ENCODE measurements at regions of chr4 and their contacts with region 1.

Region 1: DNA sequence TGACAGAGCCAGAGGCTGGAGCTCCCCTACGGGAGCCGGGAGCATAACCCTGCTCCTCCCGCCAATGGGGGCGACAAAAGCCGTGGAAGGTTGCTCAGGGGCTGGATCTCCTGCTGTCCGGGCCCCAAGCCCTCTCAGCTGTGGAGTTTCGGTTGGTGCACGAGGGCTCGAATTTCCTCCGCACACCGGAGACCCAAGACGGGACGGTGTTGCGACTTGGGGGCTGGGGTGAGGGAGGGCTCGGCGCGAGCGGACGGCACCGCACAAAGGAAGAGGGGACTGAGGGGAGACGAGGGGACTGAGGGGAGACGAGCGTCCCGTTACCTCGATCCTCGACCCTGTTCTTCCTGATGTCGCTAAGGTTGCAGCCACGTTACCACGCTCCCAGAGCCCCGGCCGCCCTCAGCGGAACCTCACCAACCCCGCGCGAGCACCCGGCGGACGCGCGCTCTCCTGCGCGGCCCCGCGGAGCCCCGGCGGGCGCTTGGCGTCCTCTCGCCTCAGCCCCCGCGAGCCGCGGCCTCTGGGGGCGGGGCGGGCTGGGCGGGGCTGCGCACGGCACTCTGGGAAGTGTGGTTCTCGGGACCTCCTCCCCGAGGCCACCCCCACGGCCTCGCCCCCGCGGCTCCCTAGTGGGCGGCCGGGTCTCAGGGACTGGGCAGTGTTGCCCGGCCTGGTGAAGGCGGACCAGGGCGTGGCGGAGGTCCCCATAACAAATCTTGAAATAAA is at the start of gene KLHL8:
- DNase-seq: peak; percentile 71 to 94 (median 83)
- ATAC-seq: peak; percentile 88
- H3K4me3 ChIP-seq: peak within 1 kb of the TSS; percentile 96
- H3K4me3 Mint-ChIP-seq: peak within 1 kb of the TSS; percentile 96
- H3K27ac ChIP-seq: peak within 1 kb of the TSS; percentile 79 to 88
- H3K27ac Mint-ChIP-seq: peak within 1 kb of the TSS; percentile 88
- H3K4me1 ChIP-seq: peaks cover 24% of the 10 kb centered on the region
- H3K4me1 Mint-ChIP-seq: peaks cover 24% of the 10 kb centered on the region
- H3K27me3 ChIP-seq: no peaks in the 10 kb centered on the region
- H3K27me3 Mint-ChIP-seq: no peaks in the 10 kb centered on the region
- CTCF ChIP-seq: no peak
- total RNA-seq, gene KLHL8: 6.3 to 7.0 TPM

Region 2: DNA sequence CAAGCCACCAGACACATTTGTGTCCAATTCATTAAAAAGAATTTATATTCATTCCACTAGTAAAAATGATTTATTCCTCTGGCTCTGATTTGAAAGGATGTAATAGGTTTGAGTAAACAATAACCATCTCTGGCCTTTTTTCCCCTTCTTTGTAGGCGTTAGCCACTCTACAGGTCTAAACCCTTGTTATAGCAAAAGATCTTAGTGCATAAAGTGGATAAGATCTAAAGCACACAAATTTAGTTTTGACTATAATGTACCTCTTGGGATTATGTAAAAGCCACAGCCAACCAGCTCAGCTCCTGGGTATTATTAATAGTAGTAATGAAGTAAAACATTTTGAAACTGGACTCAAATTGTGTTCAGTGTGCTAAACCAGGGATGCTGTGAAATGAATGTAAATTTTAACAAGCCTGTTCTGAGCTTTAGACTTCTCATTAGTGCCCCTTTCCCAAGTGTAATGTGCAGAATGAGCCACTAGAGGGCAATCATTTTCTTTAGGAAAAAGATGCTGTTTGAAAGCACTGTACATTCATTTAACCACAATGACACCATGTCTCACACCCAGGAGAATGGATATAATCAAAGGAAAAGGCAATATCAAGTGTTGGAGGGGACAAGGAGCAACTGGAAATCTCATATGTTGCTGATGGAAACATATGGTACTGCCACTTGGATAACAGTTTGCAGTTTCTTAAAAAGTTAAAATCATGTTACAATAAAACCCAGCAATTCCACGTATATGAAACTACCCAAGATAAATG is 69.6 kb before region 1 on chr4:
- CTCF ChIA-PET with region 1: interaction called, 5 read pairs
- POLR2A ChIA-PET with region 1: interaction called, 14 read pairs
- intact Hi-C with region 1: no loop called
- DNase-seq: peak in 10 of 14 experiments; percentile 14 to 79 (median 42)
- ATAC-seq: peak; percentile 84
- H3K4me3 ChIP-seq: no peak overlapping the region
- H3K4me3 Mint-ChIP-seq: no peak overlapping the region
- H3K27ac ChIP-seq: no peak overlapping the region
- H3K27ac Mint-ChIP-seq: no peak overlapping the region
- H3K4me1 ChIP-seq: no peaks in the 10 kb centered on the region
- H3K4me1 Mint-ChIP-seq: no peaks in the 10 kb centered on the region
- H3K27me3 ChIP-seq: no peaks in the 10 kb centered on the region
- H3K27me3 Mint-ChIP-seq: no peaks in the 10 kb centered on the region
- CTCF ChIP-seq: peak; percentile 97

Region 3: GRCh38 chr4:87209696-87210095 is 10.6 kb before region 1 on chr4:
- CTCF ChIA-PET with region 1: interaction called, 6 read pairs
- POLR2A ChIA-PET with region 1: interaction called, 14 read pairs
- intact Hi-C with region 1: no loop called
- DNase-seq: peak in 5 of 14 experiments; percentile 7 to 67 (median 27)
- ATAC-seq: peak; percentile 84
- H3K4me3 ChIP-seq: peak overlapping the region; percentile 0
- H3K4me3 Mint-ChIP-seq: peak overlapping the region; percentile 78
- H3K27ac ChIP-seq: no peak overlapping the region
- H3K27ac Mint-ChIP-seq: peak overlapping the region; percentile 47
- H3K4me1 ChIP-seq: no peaks in the 10 kb centered on the region
- H3K4me1 Mint-ChIP-seq: peaks cover 17% of the 10 kb centered on the region
- H3K27me3 ChIP-seq: no peaks in the 10 kb centered on the region
- H3K27me3 Mint-ChIP-seq: no peaks in the 10 kb centered on the region
- CTCF ChIP-seq: no peak

Measured in CD4-positive, alpha-beta T cell (primary cell).